ENCODE measurements at regions of chr11 and their contacts with region 1.

Region 1: DNA sequence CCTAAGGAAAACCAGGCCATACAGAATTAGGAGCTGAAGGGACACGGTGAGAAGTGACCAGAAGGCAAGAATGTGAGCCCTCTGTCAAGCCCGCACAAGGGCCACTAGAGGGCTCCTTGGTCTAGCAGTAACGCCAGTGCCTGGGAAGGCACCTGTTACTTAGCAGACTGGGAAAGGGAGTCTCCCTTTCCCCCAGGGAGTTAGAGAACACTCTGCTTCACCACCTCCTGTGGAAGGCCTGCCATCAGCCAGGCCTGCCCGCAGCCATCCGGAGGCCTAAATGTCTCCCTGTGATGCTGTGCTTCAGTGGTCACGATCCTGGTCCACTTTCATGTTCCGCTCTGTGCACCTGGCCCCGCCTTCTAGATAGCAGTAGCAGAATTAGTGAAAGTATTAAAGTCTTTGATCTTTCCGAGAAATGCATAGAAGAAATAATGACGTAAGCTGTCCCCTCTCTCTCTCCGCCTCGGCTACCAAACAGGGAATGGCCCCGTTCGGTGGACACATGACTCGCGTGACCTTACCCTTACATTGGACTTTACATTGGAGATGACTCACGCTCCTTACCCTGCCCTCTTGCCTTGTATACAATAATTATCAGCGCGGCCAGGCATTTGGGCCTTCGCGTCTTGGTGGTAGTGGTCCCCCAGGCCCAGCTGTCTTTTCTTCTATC is 10.7 kb upstream of the GSTP1 start:
- DNase-seq: no peak
- H3K4me3 ChIP-seq: no peak overlapping the region
- H3K27ac ChIP-seq: no peak overlapping the region
- H3K4me1 ChIP-seq: peaks cover 0 to 3% (median 3%) of the 10 kb centered on the region in 4 donors
- H3K27me3 ChIP-seq: peaks cover 0 to 40% (median 0%) of the 10 kb centered on the region in 4 donors
- CTCF ChIP-seq: peak; percentile 65 to 82 (median 70)
- EP300 ChIP-seq: no peak
- POLR2A ChIP-seq: no peak

Region 2: DNA sequence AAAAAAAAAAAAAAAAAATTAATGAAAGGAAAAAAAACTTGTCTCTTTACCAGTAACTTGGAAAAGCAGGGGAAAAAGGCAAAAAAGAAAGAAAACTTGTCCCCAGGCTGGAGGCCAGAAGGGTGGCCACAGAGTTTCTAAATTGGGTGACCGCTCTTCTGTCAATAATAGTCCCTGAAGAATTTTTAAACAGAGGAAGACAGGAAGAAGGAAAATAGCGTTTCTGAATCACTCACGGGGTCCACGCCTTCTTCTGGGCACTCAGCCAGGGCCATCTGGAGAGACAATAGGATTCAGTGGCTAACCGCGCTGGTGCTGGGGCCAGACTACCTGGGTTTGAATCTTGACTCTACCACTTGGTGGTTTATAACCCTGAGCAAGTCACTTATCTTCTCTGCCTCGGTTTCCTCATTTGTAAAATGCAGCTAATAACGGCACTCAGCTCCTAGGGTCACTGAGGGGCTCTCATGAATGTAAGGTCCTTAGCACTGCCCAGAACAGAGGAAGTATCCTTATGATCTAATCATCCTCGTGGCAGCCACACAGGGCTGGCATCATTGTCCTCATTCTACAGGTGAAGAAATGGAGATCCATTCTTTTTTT is 590.8 kb before region 1 on chr11:
- intact Hi-C with region 1: no loop called
- DNase-seq: no peak
- H3K4me3 ChIP-seq: no peak overlapping the region
- H3K27ac ChIP-seq: no peak overlapping the region
- H3K4me1 ChIP-seq: peaks cover 15 to 29% (median 19%) of the 10 kb centered on the region in 4 donors
- H3K27me3 ChIP-seq: no peaks in the 10 kb centered on the region
- CTCF ChIP-seq: no peak
- EP300 ChIP-seq: no peak
- POLR2A ChIP-seq: no peak

Region 3: DNA sequence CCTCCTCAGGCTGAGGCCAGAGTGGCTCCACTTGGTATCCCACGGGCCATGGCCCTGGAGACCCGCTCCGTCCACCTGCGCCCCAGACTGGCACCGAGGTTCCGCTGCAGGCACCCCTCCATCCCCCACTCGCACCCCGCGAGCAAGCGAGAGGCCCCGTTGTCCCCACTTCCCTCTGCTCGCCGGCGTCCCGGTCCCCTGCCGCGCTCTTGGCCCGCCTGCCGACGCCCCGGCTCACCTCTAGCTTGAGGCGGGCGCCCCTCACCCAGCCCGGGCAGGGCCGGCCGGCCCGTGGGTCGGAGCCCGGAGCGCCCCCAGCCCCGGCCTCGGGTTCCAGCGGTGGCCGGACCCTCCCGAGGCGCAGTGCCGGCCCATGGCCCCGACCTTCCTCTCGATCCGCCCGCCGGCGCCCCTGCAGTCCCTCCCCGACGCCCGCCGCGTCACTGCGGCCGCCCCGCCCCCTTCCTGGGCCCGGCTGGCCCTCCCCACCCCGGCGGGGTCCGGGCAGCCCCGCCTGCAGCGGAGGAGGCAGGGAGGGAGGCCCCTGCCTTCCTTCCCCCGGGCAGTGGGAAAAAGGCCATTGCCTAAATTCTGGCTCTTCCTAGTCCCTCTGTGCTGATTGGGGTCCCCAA is 67.8 kb before region 1 on chr11 and contains the start of gene PITPNM1:
- intact Hi-C with region 1: no loop called
- DNase-seq: no peak
- H3K4me3 ChIP-seq: peak within 1 kb of the TSS; percentile 55 to 64 (median 60)
- H3K27ac ChIP-seq: peak within 1 kb of the TSS; percentile 97 to 100 (median 98)
- H3K4me1 ChIP-seq: peaks cover 27 to 60% (median 54%) of the 10 kb centered on the region in 4 donors
- H3K27me3 ChIP-seq: peaks cover 0 to 38% (median 3%) of the 10 kb centered on the region in 4 donors
- CTCF ChIP-seq: no peak
- EP300 ChIP-seq: no peak
- POLR2A ChIP-seq: no peak
- total RNA-seq, gene PITPNM1: 11.6 to 23.6 (median 15.3) TPM

Region 4: DNA sequence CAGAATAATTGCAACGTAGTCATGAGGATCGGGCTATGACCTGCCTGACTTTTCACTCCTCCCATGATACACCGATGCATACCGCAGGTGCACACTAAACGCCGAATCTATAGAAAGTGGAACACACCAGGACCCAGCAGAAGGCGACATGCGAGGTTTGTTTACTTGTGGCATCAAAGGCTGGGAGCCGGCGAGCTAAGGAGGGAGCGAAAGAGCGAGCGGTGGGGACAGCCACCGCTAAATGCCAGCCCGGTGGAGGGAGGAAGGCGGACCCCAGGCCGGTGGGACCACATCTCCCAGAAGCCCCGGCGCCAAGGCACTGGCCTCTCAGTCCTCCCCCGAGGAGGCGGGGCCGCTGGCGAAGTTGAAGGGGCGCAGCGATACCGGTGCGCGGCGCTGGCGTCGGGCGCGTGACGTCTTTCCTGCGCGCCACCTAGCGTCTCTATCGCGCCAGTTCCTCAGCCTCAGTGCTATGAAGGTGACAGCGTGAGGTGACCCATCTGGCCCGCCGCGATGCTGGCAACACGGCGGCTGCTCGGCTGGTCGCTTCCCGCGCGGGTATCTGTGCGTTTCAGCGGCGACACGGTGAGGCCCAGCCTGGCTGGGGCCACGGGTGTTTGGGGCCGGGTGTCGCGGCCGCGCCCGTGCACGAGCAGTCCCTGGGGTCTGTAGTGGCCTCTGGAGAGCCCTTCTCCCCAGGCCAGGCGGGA is 33.8 kb after region 1 on chr11 and contains the start of gene NDUFV1:
- intact Hi-C with region 1: loop called (anchors 5 kb)
- DNase-seq: peak; percentile 99
- H3K4me3 ChIP-seq: peak within 1 kb of the TSS; percentile 71 to 100 (median 96)
- H3K27ac ChIP-seq: peak within 1 kb of the TSS; percentile 84 to 90 (median 87)
- H3K4me1 ChIP-seq: peaks cover 19 to 34% (median 28%) of the 10 kb centered on the region in 4 donors
- H3K27me3 ChIP-seq: peaks cover 0 to 5% (median 0%) of the 10 kb centered on the region in 4 donors
- CTCF ChIP-seq: peak; percentile 62 to 78 (median 76)
- EP300 ChIP-seq: no peak
- POLR2A ChIP-seq: no peak
- total RNA-seq, gene NDUFV1: 196 to 252 (median 212) TPM

Region 5: DNA sequence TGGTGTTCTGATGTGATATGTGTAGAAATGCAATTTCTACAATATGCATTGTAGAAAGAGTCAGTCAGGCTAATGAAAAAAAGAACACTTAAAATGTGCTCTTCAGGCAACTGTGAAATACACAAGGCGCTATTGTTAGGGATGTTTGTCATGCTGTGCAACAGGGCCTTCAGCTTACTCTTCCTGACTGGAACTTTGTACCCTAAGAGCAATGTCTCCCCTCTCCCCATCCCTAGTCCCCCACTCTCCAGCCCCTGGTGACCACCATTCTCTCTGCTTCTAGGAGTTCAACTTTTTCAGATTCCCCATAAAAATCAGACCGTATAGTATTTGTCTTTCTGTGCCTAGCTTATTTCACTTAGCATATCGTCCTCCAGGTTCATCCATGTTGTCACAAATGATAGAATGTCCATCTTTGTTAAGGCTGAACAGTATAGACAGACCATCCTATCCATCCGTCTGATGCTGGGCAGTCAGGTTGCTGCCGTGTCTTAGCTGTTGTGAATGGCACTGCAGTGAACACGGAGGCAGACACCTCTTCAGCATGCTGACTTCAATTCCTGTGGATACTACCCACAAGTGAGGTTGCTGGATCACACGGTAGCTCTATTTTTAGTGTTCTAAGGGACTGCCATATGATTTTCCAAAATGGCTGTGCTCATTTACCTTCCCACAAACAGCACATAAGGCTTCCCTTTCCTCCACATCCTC is 44.5 kb after region 1 on chr11:
- intact Hi-C with region 1: no loop called
- DNase-seq: no peak
- H3K4me3 ChIP-seq: no peak overlapping the region
- H3K27ac ChIP-seq: no peak overlapping the region
- H3K4me1 ChIP-seq: peaks cover 9 to 23% (median 15%) of the 10 kb centered on the region in 4 donors
- H3K27me3 ChIP-seq: peaks cover 0 to 31% (median 10%) of the 10 kb centered on the region in 4 donors
- CTCF ChIP-seq: no peak
- EP300 ChIP-seq: no peak
- POLR2A ChIP-seq: no peak

Region 6: DNA sequence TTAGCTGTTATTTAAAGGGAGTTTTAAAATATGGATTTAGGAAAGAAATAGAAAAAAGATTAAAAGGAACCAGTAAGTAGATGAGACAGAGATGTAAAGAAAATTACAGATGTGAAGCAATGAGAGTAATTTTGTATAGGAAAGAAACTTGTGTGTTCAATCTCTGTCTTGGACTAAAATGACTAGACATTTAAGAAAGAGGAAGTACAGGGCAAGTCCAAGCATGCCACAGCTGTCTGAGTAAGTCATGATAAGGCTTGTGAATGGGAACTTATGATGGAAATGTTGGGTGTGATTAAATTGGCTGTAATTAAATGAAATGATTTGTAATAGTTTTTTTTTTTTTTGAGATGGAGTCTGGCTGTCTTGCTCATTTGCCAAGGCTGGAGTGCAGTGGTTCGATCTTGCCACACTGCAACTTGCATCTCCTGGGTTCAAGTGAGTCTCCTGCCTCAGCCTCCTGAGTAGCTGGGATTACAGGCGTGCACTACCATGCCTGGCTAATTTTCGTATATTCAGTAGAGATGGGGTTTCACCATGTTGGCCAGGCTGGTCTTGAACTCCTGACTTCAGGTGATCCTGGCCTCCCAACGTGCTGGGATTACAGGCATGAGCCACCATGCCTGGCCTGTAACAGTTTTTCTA is 83.5 kb after region 1 on chr11:
- intact Hi-C with region 1: loop called (anchors 5 kb)
- DNase-seq: no peak
- H3K4me3 ChIP-seq: no peak overlapping the region
- H3K27ac ChIP-seq: no peak overlapping the region
- H3K4me1 ChIP-seq: no peaks in the 10 kb centered on the region
- H3K27me3 ChIP-seq: peaks cover 0 to 10% (median 0%) of the 10 kb centered on the region in 4 donors
- CTCF ChIP-seq: no peak
- EP300 ChIP-seq: no peak
- POLR2A ChIP-seq: no peak